CD8-positive, alpha-beta T cell (primary cell): ENCODE measurements at regions of chr16 and their contacts with region 1.

Region 1: GRCh38 chr16:53703590-53704444 is at the starts of genes FTO and RPGRIP1L:
- DNase-seq: peak; percentile 89 to 98 (median 95)
- ATAC-seq: peak; percentile 90
- H3K4me3 ChIP-seq: peak within 1 kb of the TSS; percentile 75 to 86
- H3K4me3 Mint-ChIP-seq: peak within 1 kb of the TSS; percentile 96
- H3K27ac ChIP-seq: peak within 1 kb of the TSS; percentile 61 to 68
- H3K27ac Mint-ChIP-seq: peak within 1 kb of the TSS; percentile 95
- H3K4me1 ChIP-seq: peaks cover 21% of the 10 kb centered on the region
- H3K4me1 Mint-ChIP-seq: peaks cover 48% of the 10 kb centered on the region
- H3K27me3 ChIP-seq: no peaks in the 10 kb centered on the region
- H3K27me3 Mint-ChIP-seq: no peaks in the 10 kb centered on the region
- CTCF ChIP-seq: no peak
- total RNA-seq, gene FTO: 30.4 to 32.9 TPM
- total RNA-seq, gene RPGRIP1L: 1.5 to 2.2 TPM

Region 2: GRCh38 chr16:53372992-53373871 is 330.6 kb before region 1 on chr16:
- CTCF ChIA-PET with region 1: no interaction called
- POLR2A ChIA-PET with region 1: no interaction called
- intact Hi-C with region 1: loop called in 1 of 2 experiments (anchors 5 kb)
- DNase-seq: peak; percentile 60 to 88 (median 77)
- ATAC-seq: peak; percentile 96
- H3K4me3 ChIP-seq: peak overlapping the region; percentile 54 to 84
- H3K4me3 Mint-ChIP-seq: no peak overlapping the region
- H3K27ac ChIP-seq: peak overlapping the region in 1 of 2 experiments; percentile 35
- H3K27ac Mint-ChIP-seq: peak overlapping the region; percentile 78
- H3K4me1 ChIP-seq: peaks cover 7% of the 10 kb centered on the region
- H3K4me1 Mint-ChIP-seq: peaks cover 33% of the 10 kb centered on the region
- H3K27me3 ChIP-seq: peaks cover 0 to 3% of the 10 kb centered on the region in 2 experiments
- H3K27me3 Mint-ChIP-seq: peaks cover 6% of the 10 kb centered on the region
- CTCF ChIP-seq: no peak

Region 3: DNA sequence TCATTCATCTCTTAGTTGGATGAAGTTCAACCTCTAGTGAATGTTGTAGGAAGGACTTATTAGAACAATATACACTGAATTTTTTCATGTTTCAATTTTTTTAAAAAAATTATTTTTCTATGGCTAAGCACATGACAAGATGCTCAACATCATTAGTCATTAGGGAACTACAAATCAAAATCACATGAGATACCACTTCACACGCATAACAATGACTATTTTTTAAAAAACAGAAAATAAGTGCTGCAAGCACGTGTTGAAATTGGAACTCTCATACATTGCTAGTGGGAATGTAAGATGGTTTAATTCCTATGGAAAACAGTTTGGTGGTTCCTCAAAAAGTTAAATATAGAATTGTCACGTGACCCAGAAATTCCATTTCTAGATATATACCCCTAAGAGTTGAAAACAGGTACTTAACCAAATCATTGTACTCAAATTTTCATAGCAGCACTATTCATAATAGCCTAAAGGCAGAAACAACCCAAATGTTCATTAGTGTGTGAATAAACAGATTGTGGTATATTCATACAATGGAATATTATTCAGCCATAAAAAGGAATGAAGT is 115.7 kb before region 1 on chr16:
- CTCF ChIA-PET with region 1: no interaction called
- POLR2A ChIA-PET with region 1: no interaction called
- intact Hi-C with region 1: no loop called
- DNase-seq: no peak
- ATAC-seq: no peak
- H3K4me3 ChIP-seq: no peak overlapping the region
- H3K4me3 Mint-ChIP-seq: no peak overlapping the region
- H3K27ac ChIP-seq: no peak overlapping the region
- H3K27ac Mint-ChIP-seq: no peak overlapping the region
- H3K4me1 ChIP-seq: no peaks in the 10 kb centered on the region
- H3K4me1 Mint-ChIP-seq: no peaks in the 10 kb centered on the region
- H3K27me3 ChIP-seq: no peaks in the 10 kb centered on the region
- H3K27me3 Mint-ChIP-seq: peaks cover 4% of the 10 kb centered on the region
- CTCF ChIP-seq: no peak

Region 4: GRCh38 chr16:53678756-53679343 is 25.0 kb before region 1 on chr16:
- CTCF ChIA-PET with region 1: no interaction called
- POLR2A ChIA-PET with region 1: no interaction called
- intact Hi-C with region 1: no loop called
- DNase-seq: no peak
- ATAC-seq: no peak
- H3K4me3 ChIP-seq: no peak overlapping the region
- H3K4me3 Mint-ChIP-seq: no peak overlapping the region
- H3K27ac ChIP-seq: no peak overlapping the region
- H3K27ac Mint-ChIP-seq: no peak overlapping the region
- H3K4me1 ChIP-seq: no peaks in the 10 kb centered on the region
- H3K4me1 Mint-ChIP-seq: no peaks in the 10 kb centered on the region
- H3K27me3 ChIP-seq: no peaks in the 10 kb centered on the region
- H3K27me3 Mint-ChIP-seq: no peaks in the 10 kb centered on the region
- CTCF ChIP-seq: no peak

Region 5: GRCh38 chr16:53761962-53762721 is 58.3 kb after region 1 on chr16:
- CTCF ChIA-PET with region 1: no interaction called
- POLR2A ChIA-PET with region 1: no interaction called
- intact Hi-C with region 1: no loop called
- DNase-seq: no peak
- ATAC-seq: no peak
- H3K4me3 ChIP-seq: no peak overlapping the region
- H3K4me3 Mint-ChIP-seq: no peak overlapping the region
- H3K27ac ChIP-seq: no peak overlapping the region
- H3K27ac Mint-ChIP-seq: no peak overlapping the region
- H3K4me1 ChIP-seq: no peaks in the 10 kb centered on the region
- H3K4me1 Mint-ChIP-seq: peaks cover 29% of the 10 kb centered on the region
- H3K27me3 ChIP-seq: no peaks in the 10 kb centered on the region
- H3K27me3 Mint-ChIP-seq: no peaks in the 10 kb centered on the region
- CTCF ChIP-seq: no peak

Region 6: DNA sequence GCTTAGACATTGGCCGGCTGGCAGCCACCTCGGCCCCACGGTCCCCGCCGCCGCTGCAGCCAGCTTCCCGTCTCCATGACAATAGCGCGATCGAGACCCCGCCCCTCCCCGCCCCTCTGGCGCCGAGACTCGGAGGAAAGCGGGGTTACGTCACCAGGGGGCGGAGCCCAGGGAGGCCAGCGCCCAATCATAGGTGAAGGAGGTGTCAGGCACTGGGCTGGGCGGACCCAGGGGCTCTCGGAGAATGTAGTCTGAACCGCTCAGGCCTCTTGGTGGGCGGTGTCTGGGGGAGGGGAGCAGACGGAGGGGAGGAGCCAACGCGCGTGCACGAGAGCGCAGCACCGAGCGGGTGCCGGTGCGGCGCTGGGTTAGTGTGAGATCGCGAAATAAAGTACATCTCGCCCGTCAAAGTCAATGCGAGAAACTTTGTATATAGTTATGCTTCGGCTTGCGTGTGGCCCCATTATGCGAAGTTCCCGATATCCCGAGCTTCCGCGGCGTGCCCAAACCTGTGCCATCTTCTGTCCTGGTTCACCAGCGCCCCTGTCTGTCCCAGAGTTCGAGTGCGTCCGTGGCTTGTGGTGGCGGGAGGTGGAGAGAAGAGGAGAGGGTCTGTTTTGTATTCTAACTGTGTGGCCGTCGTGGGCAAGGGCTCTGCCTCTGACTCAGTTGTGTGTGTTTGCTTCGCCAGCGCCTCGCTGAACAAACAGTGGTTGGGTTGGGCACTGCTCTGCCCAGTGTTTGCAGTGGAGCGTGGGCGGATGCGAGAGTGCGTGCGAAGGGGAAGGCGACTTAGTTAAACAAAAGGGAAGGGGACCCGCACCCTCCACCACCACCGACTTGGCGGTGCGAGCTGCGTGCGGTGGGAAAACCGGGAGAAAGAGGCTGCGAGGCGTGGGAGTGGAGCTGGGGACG is 1225.5 kb after region 1 on chr16:
- CTCF ChIA-PET with region 1: no interaction called
- POLR2A ChIA-PET with region 1: no interaction called
- intact Hi-C with region 1: loop called in 1 of 2 experiments (anchors 5 kb)
- DNase-seq: peak; percentile 82 to 95 (median 91)
- ATAC-seq: peak; percentile 96
- H3K4me3 ChIP-seq: peak overlapping the region; percentile 46 to 48
- H3K4me3 Mint-ChIP-seq: peak overlapping the region; percentile 90
- H3K27ac ChIP-seq: no peak overlapping the region
- H3K27ac Mint-ChIP-seq: peak overlapping the region; percentile 64
- H3K4me1 ChIP-seq: peaks cover 28% of the 10 kb centered on the region
- H3K4me1 Mint-ChIP-seq: peaks cover 33% of the 10 kb centered on the region
- H3K27me3 ChIP-seq: peaks cover 38 to 51% of the 10 kb centered on the region in 2 experiments
- H3K27me3 Mint-ChIP-seq: peaks cover 61% of the 10 kb centered on the region
- CTCF ChIP-seq: no peak